Activated T-helper 1 cell treated with anti-CD3 and anti-CD28 coated beads, Interleukin-12 subunit alpha, Interleukin-12 subunit beta, Interleukin-2, Interleukin-4 antibody, amounts not matched to agents 30 ng/mL and 10 ng/mL and 1 ng/mL, durations not matched to agents 14 hours and 24 hours and 36 hours (primary cell): ENCODE measurements at regions of chr6 and their contacts with region 1.

Region 1: GRCh38 chr6:107786709-107787588 is 37.2 kb downstream of the SCML4 start:
- DNase-seq: peak; percentile 40
- H3K4me3 Mint-ChIP-seq: peak overlapping the region; percentile 71
- H3K27ac Mint-ChIP-seq: no peak overlapping the region
- H3K4me1 Mint-ChIP-seq: peaks cover 57% of the 10 kb centered on the region
- H3K27me3 Mint-ChIP-seq: peaks cover 8% of the 10 kb centered on the region

Region 2: DNA sequence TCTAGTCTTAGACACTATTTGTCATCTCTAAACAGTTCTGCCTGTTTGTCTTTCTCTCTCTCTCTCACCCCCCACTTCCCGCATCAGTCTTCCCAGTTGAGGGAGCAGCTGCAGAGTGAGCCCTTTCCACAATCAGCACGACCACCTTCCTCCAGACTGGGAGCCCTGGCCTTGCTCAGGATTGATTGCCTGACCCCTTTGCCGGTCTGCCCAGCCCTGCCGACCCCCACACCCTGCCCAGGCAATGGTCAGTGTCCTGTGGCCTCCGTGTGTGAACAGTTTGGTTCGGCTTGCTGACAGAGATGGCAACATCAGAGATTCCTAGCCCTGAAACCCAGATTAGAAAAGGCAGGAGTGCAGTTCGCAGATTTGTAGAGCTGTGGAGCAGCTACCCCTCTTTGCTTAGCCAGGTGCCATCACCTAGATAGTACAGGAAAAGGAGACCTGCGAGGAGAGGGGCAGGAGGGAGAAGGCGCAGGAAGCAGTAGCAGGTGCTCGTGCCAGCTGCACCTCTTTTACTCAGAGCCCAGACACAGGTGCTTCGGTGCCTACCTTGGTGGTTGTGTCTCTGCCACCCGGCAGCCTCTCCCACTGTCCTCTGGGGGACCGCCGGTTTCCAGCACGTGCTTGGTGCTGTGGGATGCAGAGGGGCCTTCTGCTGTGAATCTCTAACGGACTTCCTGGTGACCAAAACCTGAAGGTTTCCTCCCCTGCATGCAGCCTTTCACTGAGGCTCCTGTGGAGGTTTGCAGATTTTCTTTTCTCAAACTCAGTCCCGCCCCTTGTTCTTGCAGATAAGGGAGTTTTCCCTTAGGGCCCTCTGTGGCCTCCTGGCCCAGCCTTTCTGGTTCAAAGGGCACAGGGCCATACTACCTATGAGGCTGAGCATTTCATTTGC is 55.3 kb before region 1 on chr6:
- intact Hi-C with region 1: loop called (anchors 2 kb)
- DNase-seq: no peak
- H3K4me3 Mint-ChIP-seq: peak overlapping the region; percentile 75
- H3K27ac Mint-ChIP-seq: peak overlapping the region; percentile 21
- H3K4me1 Mint-ChIP-seq: peaks cover 78% of the 10 kb centered on the region
- H3K27me3 Mint-ChIP-seq: peaks cover 19% of the 10 kb centered on the region